Endothelial cell of umbilical vein (primary cell): ENCODE measurements at regions of chr4 and their contacts with region 1.

Region 1: GRCh38 chr4:98260579-98261290 is 449 bp upstream of the RAP1GDS1 start:
- DNase-seq: peak; percentile 98
- H3K4me3 ChIP-seq: peak overlapping the region; percentile 73 to 76 (median 73)
- H3K27ac ChIP-seq: peak overlapping the region; percentile 86
- H3K4me1 ChIP-seq: peaks cover 22% of the 10 kb centered on the region
- H3K27me3 ChIP-seq: no peaks in the 10 kb centered on the region
- CTCF ChIP-seq: no peak
- POLR2A ChIP-seq: peak; percentile 94

Region 2: GRCh38 chr4:98143001-98143899 is 117.5 kb before region 1 on chr4 and contains the start of gene STPG2:
- CTCF ChIA-PET with region 1: no interaction called
- POLR2A ChIA-PET with region 1: no interaction called
- dilution Hi-C with region 1: no loop called
- intact Hi-C with region 1: loop called (anchors 5 kb)
- DNase-seq: peak; percentile 87
- H3K4me3 ChIP-seq: peak within 1 kb of the TSS; percentile 62 to 88 (median 71)
- H3K27ac ChIP-seq: peak within 1 kb of the TSS; percentile 71
- H3K4me1 ChIP-seq: peaks cover 5% of the 10 kb centered on the region
- H3K27me3 ChIP-seq: no peaks in the 10 kb centered on the region
- CTCF ChIP-seq: peak; percentile 22 to 59
- POLR2A ChIP-seq: peak; percentile 59
- total RNA-seq, gene STPG2: not detected in 2 replicates

Region 3: GRCh38 chr4:98352396-98352795 is 91.7 kb after region 1 on chr4:
- CTCF ChIA-PET with region 1: no interaction called
- POLR2A ChIA-PET with region 1: no interaction called
- dilution Hi-C with region 1: no loop called
- intact Hi-C with region 1: loop called (anchors 2 kb)
- DNase-seq: peak; percentile 77
- H3K4me3 ChIP-seq: no peak overlapping the region
- H3K27ac ChIP-seq: peak overlapping the region; percentile 12
- H3K4me1 ChIP-seq: peaks cover 11% of the 10 kb centered on the region
- H3K27me3 ChIP-seq: no peaks in the 10 kb centered on the region
- CTCF ChIP-seq: no peak
- POLR2A ChIP-seq: no peak

Region 4: DNA sequence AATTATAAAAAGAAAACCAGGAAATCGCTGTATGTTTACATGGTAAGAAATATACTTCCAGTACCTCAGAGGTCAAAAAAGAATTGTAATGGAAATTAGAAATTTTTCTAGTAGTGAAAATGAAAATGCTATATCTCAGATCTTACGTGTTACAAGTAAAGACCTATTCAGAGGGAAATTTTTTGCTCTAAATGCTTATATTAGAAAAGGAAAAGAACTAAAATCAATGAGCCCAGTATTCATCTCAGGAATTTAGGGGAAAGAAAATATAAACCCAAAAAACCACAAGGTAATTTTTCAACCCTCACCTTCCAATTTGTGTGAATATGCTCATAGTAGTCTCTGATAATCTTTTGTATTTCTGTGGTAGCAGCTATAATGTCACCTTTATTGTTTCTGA is 146.1 kb after region 1 on chr4:
- CTCF ChIA-PET with region 1: no interaction called
- POLR2A ChIA-PET with region 1: no interaction called
- dilution Hi-C with region 1: no loop called
- intact Hi-C with region 1: loop called (anchors 5 kb)
- DNase-seq: no peak
- H3K4me3 ChIP-seq: no peak overlapping the region
- H3K27ac ChIP-seq: no peak overlapping the region
- H3K4me1 ChIP-seq: no peaks in the 10 kb centered on the region
- H3K27me3 ChIP-seq: no peaks in the 10 kb centered on the region
- CTCF ChIP-seq: no peak
- POLR2A ChIP-seq: no peak

Region 5: GRCh38 chr4:98601708-98602107 is 341.0 kb after region 1 on chr4:
- CTCF ChIA-PET with region 1: no interaction called
- POLR2A ChIA-PET with region 1: no interaction called
- dilution Hi-C with region 1: no loop called
- intact Hi-C with region 1: no loop called
- DNase-seq: peak; percentile 29
- H3K4me3 ChIP-seq: no peak overlapping the region
- H3K27ac ChIP-seq: no peak overlapping the region
- H3K4me1 ChIP-seq: peaks cover 3% of the 10 kb centered on the region
- H3K27me3 ChIP-seq: no peaks in the 10 kb centered on the region
- CTCF ChIP-seq: no peak
- POLR2A ChIP-seq: no peak

Region 6: GRCh38 chr4:99088481-99089365 is 828.0 kb after region 1 on chr4 and contains the start of gene ADH5:
- CTCF ChIA-PET with region 1: no interaction called
- POLR2A ChIA-PET with region 1: no interaction called
- dilution Hi-C with region 1: no loop called
- intact Hi-C with region 1: loop called (anchors 2 kb)
- DNase-seq: peak; percentile 72
- H3K4me3 ChIP-seq: peak within 1 kb of the TSS; percentile 80 to 98 (median 82)
- H3K27ac ChIP-seq: peak within 1 kb of the TSS; percentile 66
- H3K4me1 ChIP-seq: peaks cover 8% of the 10 kb centered on the region
- H3K27me3 ChIP-seq: no peaks in the 10 kb centered on the region
- CTCF ChIP-seq: no peak
- POLR2A ChIP-seq: peak; percentile 91
- total RNA-seq, gene ADH5: 101 and 103 TPM in 2 replicates